Esophagus muscularis mucosa (tissue), 4 donors: ENCODE measurements at regions of chr6 and their contacts with region 1.

Region 1: DNA sequence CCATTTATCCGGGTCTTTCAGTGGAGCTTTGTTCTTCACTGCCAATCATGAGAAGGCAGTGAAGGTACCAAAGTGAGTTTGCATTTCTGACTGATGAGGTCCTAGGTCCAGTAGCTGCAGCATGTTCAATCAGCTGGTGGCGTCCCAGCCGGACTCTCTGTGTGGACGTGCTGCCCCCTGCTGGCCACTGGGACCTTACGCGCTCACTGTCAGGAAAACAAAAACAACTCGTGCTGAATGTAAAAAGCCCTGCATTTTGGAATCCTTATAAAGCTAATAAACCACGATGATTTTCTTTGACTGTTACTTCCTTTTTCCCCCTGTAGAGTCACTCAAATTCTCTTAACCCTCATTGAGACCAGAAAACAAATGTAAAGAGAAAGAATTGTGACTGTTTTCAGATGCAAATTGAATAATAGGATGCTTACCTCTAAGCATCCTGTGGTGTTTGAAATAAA is 4.9 kb upstream of the CD24 start:
- DNase-seq: peak; percentile 96
- H3K4me3 ChIP-seq: no peak overlapping the region
- H3K27ac ChIP-seq: no peak overlapping the region
- H3K4me1 ChIP-seq: peaks cover 4 to 17% (median 13%) of the 10 kb centered on the region in 4 donors
- H3K27me3 ChIP-seq: peaks cover 0 to 89% (median 13%) of the 10 kb centered on the region in 4 donors
- CTCF ChIP-seq: peak; percentile 75 to 93 (median 83)
- EP300 ChIP-seq: no peak
- POLR2A ChIP-seq: no peak

Region 2: GRCh38 chr6:106444777-106445507 is 534.5 kb before region 1 on chr6:
- intact Hi-C with region 1: loop called (anchors 10 kb)
- DNase-seq: no peak
- H3K4me3 ChIP-seq: no peak overlapping the region
- H3K27ac ChIP-seq: no peak overlapping the region
- H3K4me1 ChIP-seq: no peaks in the 10 kb centered on the region
- H3K27me3 ChIP-seq: peaks cover 0 to 24% (median 0%) of the 10 kb centered on the region in 4 donors
- CTCF ChIP-seq: peak; percentile 47 to 75 (median 65)
- EP300 ChIP-seq: no peak
- POLR2A ChIP-seq: no peak